Activated CD4-positive, alpha-beta memory T cell treated with anti-CD3 and anti-CD28 coated beads for 36 hours (primary cell): ENCODE measurements at regions of chr7 and their contacts with region 1.

Region 1: GRCh38 chr7:1044191-1045068 is at the start of gene GPR146:
- DNase-seq: peak; percentile 95
- H3K4me3 Mint-ChIP-seq: peak within 1 kb of the TSS; percentile 76
- H3K27ac Mint-ChIP-seq: peak within 1 kb of the TSS; percentile 76
- H3K4me1 Mint-ChIP-seq: peaks cover 60% of the 10 kb centered on the region
- H3K27me3 Mint-ChIP-seq: no peaks in the 10 kb centered on the region
- total RNA-seq, gene GPR146: 1.6 to 2.1 TPM

Region 2: GRCh38 chr7:1028031-1028770 is 16.2 kb before region 1 on chr7:
- CTCF ChIA-PET with region 1: interaction called, 7 read pairs
- POLR2A ChIA-PET with region 1: interaction called, 3 read pairs
- intact Hi-C with region 1: loop called (anchors 1 kb)
- DNase-seq: peak; percentile 92
- H3K4me3 Mint-ChIP-seq: peak overlapping the region; percentile 66
- H3K27ac Mint-ChIP-seq: peak overlapping the region; percentile 83
- H3K4me1 Mint-ChIP-seq: peaks cover 37% of the 10 kb centered on the region
- H3K27me3 Mint-ChIP-seq: no peaks in the 10 kb centered on the region

Region 3: GRCh38 chr7:1033546-1034145 is 10.8 kb before region 1 on chr7:
- CTCF ChIA-PET with region 1: interaction called, 7 read pairs
- POLR2A ChIA-PET with region 1: interaction called, 3 read pairs
- intact Hi-C with region 1: loop called (anchors 1 kb)
- DNase-seq: peak; percentile 28
- H3K4me3 Mint-ChIP-seq: no peak overlapping the region
- H3K27ac Mint-ChIP-seq: peak overlapping the region; percentile 54
- H3K4me1 Mint-ChIP-seq: peaks cover 43% of the 10 kb centered on the region
- H3K27me3 Mint-ChIP-seq: no peaks in the 10 kb centered on the region

Region 4: GRCh38 chr7:1368682-1369571 is 324.5 kb after region 1 on chr7:
- CTCF ChIA-PET with region 1: no interaction called
- POLR2A ChIA-PET with region 1: no interaction called
- intact Hi-C with region 1: no loop called
- DNase-seq: peak; percentile 57
- H3K4me3 Mint-ChIP-seq: no peak overlapping the region
- H3K27ac Mint-ChIP-seq: no peak overlapping the region
- H3K4me1 Mint-ChIP-seq: no peaks in the 10 kb centered on the region
- H3K27me3 Mint-ChIP-seq: peaks cover 50% of the 10 kb centered on the region